Psoas muscle (tissue), 8 donors: ENCODE measurements at regions of chr13 and their contacts with region 1.

Region 1: DNA sequence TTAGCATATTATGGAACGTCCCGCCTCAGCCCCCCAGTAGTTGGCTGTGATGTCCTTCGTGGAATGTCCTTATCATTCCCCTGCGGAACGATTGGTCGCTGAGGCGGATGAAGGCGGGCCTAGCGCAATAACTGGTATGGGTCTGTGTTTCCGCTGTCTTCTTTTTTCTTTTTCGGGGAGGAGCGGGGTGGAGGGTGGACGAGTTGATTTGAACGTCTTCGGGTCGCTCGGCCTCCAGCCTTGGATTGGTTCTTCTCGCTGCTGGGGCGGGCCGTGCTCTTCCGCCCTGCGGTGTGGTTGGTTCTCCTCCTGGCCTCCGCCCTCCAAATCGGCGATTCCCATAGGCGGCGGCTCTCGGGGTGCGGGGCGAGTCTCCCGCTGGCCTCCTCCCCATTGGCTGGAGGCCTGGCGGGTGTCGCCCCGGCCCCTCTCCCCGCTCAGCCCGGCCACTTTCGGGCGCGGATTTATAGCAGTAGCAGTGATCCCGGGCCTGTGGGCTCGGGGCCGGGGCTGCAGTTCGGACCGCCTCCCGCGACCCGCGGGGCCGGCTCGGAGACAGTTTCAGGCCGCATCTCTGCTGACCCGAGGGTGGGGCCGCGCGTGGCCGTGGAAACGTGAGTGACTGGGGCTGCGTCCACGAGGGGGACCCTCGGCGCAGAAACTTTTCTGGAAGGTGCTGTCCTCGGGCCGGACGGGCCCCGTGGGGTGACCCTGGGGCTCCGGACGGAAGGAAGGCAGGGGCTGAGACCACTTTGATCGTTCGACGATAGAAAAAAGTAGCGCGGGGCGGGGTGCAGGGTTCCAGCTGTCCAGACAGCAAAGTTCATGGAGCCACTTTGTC is 2.1 kb downstream of the ING1 start:
- DNase-seq: peak; percentile 97 to 99
- ATAC-seq: peak; percentile 72 to 78 (median 74)
- H3K4me3 ChIP-seq: peak overlapping the region; percentile 90
- H3K27ac ChIP-seq: peak overlapping the region; percentile 99
- H3K4me1 ChIP-seq: peaks cover 28% of the 10 kb centered on the region
- H3K27me3 ChIP-seq: no peaks in the 10 kb centered on the region
- CTCF ChIP-seq: peak; percentile 21

Region 2: GRCh38 chr13:108919042-108919907 is 1796.3 kb before region 1 on chr13:
- intact Hi-C with region 1: no loop called
- DNase-seq: no peak
- ATAC-seq: no peak
- H3K4me3 ChIP-seq: no peak overlapping the region
- H3K27ac ChIP-seq: no peak overlapping the region
- H3K4me1 ChIP-seq: no peaks in the 10 kb centered on the region
- H3K27me3 ChIP-seq: no peaks in the 10 kb centered on the region
- CTCF ChIP-seq: no peak

Region 3: GRCh38 chr13:110615322-110616102 is 100.1 kb before region 1 on chr13 and contains the start of gene NAXD:
- intact Hi-C with region 1: loop called in 1 of 2 experiments (anchors 5 kb)
- DNase-seq: peak; percentile 96 to 97
- ATAC-seq: peak; percentile 92 to 93 (median 93)
- H3K4me3 ChIP-seq: peak within 1 kb of the TSS; percentile 100
- H3K27ac ChIP-seq: peak within 1 kb of the TSS; percentile 96
- H3K4me1 ChIP-seq: peaks cover 34% of the 10 kb centered on the region
- H3K27me3 ChIP-seq: peaks cover 0 to 13% (median 0%) of the 10 kb centered on the region in 3 donors
- CTCF ChIP-seq: no peak
- total RNA-seq, gene NAXD: 29.2 to 59.2 (median 29.7) TPM

Region 4: GRCh38 chr13:110771194-110771593 is 55.6 kb after region 1 on chr13:
- intact Hi-C with region 1: no loop called
- DNase-seq: no peak
- ATAC-seq: peak in 1 of 4 donors; percentile 42
- H3K4me3 ChIP-seq: no peak overlapping the region
- H3K27ac ChIP-seq: no peak overlapping the region
- H3K4me1 ChIP-seq: no peaks in the 10 kb centered on the region
- H3K27me3 ChIP-seq: peaks cover 0 to 7% (median 0%) of the 10 kb centered on the region in 3 donors
- CTCF ChIP-seq: no peak

Region 5: GRCh38 chr13:110869805-110870706 is 154.4 kb after region 1 on chr13:
- intact Hi-C with region 1: loop called (anchors 2 to 5 kb)
- DNase-seq: peak; percentile 93 to 95
- ATAC-seq: peak; percentile 85 to 92 (median 88)
- H3K4me3 ChIP-seq: peak overlapping the region; percentile 89
- H3K27ac ChIP-seq: peak overlapping the region; percentile 100
- H3K4me1 ChIP-seq: peaks cover 32% of the 10 kb centered on the region
- H3K27me3 ChIP-seq: no peaks in the 10 kb centered on the region
- CTCF ChIP-seq: peak; percentile 16

Region 6: DNA sequence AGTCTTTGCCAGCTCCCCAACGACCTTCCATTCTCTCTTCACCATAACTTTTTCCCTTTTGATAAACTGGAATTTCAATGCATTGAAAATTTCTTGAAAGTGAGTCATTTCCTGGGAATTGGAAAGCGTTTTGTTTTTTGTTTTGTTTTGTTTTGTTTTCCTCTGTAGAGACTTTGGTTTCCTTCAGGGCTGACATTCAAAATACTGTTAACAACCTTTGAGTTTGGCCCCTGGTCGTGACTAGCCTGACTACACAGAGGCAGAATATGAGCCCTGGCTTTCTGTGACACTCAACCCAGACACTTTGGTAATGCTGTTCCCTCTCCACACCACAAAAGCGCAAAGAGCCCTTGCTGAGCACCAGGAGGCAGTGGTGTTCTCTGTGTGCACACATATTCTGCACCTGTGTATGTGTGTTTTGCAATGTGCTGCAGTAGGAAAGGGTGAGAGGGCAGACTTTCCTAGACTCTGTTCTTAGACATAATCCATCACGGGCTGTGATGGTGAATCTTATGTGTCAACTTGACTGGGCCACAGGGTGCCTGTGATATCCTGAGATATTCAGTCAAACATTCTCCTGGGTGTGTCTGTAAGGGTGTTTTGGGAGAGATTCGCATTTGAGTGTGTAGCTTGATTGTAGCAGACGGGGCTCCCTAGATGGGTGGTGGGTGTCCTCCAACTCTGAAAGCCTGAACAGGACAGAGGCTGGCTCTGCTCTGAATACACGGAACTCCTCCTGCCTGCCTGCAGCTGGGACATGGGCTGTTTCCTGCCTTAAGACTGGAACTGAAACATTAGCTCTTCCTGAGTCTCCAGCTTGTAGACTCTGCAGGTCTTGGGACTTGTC is 228.7 kb after region 1 on chr13:
- intact Hi-C with region 1: no loop called
- DNase-seq: peak in 1 of 2 donors; percentile 35
- ATAC-seq: peak; percentile 91 to 95 (median 93)
- H3K4me3 ChIP-seq: no peak overlapping the region
- H3K27ac ChIP-seq: no peak overlapping the region
- H3K4me1 ChIP-seq: no peaks in the 10 kb centered on the region
- H3K27me3 ChIP-seq: peaks cover 0 to 2% (median 0%) of the 10 kb centered on the region in 3 donors
- CTCF ChIP-seq: peak; percentile 64